MCF 10A (cell line): ENCODE measurements at regions of chr1 and their contacts with region 1.

Region 1: DNA sequence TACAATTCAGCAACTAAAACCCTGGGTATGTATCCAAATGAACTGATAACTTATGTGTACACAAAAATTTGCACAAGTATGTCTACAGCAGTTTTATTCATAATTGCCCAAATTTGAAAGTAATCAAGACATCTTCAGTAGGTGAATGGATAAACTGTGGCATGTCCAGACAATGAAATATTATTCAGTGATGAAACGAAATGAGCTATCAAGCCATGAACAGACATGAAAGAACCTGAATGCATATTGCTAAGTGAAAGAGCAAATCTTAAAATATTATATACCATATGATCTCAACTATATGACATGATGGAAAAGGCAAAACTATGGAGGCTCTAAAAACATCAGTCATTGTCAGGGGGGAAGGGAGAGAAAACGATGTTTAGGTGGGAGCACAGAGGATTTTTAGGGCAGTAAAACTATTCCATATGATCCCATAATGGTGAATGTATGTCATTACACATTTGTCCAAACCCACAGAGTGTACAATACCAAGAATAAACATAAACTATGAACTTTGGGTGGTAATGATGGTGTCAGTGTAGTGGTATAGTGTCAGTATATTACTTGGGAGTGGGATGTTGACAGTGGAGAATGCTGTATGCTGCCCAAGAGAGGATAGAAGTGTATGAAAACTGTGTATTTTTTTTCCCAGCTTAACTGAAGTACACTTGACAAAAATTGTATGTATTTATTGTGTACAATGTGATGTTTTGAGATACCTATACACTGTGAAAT is 92.8 kb upstream of the PPP2R5A start:
- DNase-seq: no peak
- H3K4me3 Mint-ChIP-seq: no peak overlapping the region
- H3K27ac Mint-ChIP-seq: no peak overlapping the region
- H3K4me1 Mint-ChIP-seq: peaks cover 11% of the 10 kb centered on the region
- H3K27me3 Mint-ChIP-seq: no peaks in the 10 kb centered on the region
- CTCF ChIP-seq: no peak

Region 2: DNA sequence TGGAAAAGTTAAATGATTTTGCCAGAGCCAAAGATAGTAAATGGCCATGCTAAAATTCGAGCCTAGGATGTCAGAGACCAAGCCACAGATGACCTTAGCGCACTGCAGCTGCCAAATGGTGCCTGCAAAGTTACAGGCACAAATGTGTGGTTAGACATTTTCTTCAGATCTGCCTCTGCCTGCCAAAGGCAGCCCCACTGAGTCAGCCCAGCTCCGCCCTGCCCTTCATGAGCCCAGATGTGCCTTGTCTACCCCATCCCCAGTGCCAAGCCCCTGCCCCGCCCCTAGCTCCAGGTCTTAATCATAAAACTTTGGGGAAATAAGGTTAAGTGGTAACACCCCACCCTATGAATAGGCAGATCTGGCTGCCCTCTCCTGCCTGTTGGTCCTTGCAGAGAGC is 51.0 kb before region 1 on chr1:
- CTCF ChIA-PET with region 1: no interaction called
- POLR2A ChIA-PET with region 1: no interaction called
- intact Hi-C with region 1: no loop called
- DNase-seq: peak; percentile 72
- H3K4me3 Mint-ChIP-seq: no peak overlapping the region
- H3K27ac Mint-ChIP-seq: peak overlapping the region; percentile 8
- H3K4me1 Mint-ChIP-seq: peaks cover 16% of the 10 kb centered on the region
- H3K27me3 Mint-ChIP-seq: no peaks in the 10 kb centered on the region
- CTCF ChIP-seq: no peak

Region 3: DNA sequence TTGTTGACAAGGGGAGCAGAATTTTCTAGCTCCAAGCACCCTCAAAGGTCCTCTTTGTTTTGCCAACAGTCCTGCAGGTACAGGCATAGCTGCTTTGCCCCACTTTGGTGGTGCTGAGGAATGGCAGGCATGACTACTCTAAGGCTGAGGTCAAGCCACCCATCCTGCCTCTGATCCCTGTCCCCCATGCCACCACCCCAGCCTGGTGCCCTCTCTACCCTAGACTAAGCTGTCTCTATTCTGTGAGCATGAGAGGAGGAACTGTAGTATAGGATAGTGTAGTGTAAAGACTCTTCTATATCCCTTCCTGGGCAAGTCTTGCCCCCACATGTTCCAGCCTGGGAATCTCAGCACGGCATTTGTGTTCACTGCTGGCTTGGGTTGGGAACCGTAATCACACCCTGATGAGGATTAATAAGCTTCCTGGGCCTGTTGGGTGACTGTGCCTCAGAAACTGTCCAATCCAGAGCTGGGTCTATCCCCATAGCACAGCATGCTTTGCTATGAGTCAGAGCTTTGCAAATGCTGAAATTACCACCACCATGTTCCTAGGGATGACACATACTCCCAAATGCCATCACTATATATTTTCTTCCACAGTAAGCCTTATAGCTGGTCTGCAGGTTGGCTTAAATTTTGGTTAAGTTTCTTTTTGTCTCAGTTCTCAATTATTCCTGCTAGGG is 12.9 kb before region 1 on chr1:
- CTCF ChIA-PET with region 1: interaction called, 5 read pairs
- POLR2A ChIA-PET with region 1: interaction called, 10 read pairs
- intact Hi-C with region 1: no loop called
- DNase-seq: peak; percentile 96
- H3K4me3 Mint-ChIP-seq: no peak overlapping the region
- H3K27ac Mint-ChIP-seq: peak overlapping the region; percentile 71
- H3K4me1 Mint-ChIP-seq: peaks cover 9% of the 10 kb centered on the region
- H3K27me3 Mint-ChIP-seq: no peaks in the 10 kb centered on the region
- CTCF ChIP-seq: no peak